ENCODE measurements at regions of chr17 and their contacts with region 1.

Region 1: DNA sequence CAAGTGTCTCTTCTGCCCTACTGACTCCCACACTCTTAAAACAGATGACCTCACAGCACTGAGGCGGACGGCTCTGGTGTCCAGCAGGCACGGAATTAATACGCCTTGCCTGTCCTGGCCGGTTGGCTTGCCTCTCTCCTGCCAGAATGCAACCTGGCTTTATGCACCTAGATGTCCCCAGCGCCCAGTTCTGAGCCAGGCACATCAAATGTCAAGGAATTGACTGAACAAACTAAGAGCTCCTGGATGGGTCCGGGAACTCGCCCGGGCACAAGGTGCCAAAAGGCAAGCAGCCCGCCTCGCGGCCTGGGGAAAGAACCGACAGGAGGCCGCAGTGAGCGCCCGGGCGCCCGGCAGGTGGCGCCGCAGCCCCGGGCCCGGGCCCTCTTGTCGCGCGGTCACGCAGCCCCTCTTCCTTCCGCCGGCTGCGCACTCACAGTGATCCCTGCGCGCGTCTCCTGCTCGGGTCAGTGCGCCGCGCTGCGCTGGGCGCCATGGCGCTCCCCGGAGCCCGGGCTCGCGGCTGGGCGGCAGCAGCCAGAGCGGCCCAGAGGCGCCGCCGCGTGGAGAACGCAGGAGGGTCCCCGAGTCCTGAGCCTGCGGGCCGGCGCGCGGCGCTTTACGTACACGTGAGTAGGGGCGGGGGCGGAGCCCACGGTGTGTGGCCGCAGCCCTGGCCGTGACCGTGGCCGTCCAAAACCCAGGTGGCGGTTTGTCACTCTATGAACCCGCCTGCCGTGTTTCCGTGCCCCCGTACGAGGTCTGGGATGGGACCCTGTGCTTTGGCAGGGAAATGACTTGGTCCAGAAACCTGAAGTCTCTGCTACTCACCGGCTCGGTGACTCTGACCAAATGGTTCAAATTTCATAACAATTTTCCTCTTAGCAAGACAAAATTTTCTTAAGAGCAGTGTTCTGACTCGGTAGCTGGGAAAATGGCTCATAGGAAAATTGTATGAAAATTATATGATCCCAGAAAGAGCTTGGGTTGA is at the start of gene RSAD1:
- DNase-seq: peak; percentile 65 to 96 (median 82)

Region 2: DNA sequence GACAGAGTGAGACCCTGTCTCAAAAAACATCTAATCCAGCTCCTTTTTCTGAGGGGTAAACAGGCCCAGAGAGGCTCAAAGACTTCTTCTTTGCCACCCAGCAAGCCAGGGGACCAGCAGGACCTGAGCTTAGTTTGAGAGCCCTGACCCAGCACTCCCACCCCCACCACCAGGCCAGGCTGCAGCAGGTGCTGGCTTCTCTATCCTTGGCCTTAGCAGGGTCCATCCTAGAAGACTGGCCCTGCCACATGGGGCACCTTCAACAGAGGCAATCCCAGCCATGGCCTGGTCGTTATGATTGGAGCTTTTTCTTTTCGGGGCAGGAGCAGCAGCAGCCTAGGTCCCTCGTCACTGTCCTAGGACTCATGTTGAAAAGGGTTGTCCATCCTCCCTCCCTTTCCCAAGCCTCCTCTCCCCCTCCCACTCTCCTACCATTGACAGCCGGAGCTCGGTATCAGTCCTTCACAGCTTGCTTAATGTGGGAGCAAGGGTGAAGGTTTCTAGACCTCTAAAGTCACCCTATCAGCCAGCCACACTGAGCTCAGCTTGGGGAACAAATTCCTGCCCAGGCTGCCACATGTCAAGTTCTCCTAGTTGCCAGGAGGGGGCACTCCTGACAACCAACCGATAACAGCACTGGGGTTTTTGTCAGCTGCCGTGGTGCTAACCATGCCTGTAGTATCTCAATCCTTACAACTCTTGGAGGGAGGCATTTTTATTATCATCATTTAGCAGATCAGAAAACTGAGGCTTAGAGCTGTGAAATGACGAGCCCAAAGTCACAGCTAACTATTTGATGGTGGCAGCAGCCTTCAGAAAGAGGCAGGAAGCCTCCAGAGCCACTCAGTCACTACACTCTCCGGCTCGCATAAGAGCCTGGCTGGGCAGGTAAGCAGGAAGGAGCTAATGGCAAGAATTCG is 116.9 kb before region 1 on chr17:
- intact Hi-C with region 1: loop called (anchors 1 kb)
- DNase-seq: peak in 8 of 10 donors; percentile 43 to 94 (median 61)

Region 3: GRCh38 chr17:50541716-50542688 is 63.3 kb after region 1 on chr17:
- intact Hi-C with region 1: loop called (anchors 2 kb)
- DNase-seq: peak; percentile 75 to 98 (median 86)

Region 4: GRCh38 chr17:50626037-50626574 is 147.4 kb after region 1 on chr17:
- intact Hi-C with region 1: loop called (anchors 1 kb)
- DNase-seq: peak in 7 of 10 donors; percentile 50 to 94 (median 56)

Region 5: GRCh38 chr17:50697663-50698274 is 219.1 kb after region 1 on chr17:
- intact Hi-C with region 1: loop called (anchors 5 kb)
- DNase-seq: no peak

Measured in posterior cingulate gyrus (tissue), 11 donors.